CD8-positive, alpha-beta memory T cell (primary cell): ENCODE measurements at regions of chr11 and their contacts with region 1.

Region 1: GRCh38 chr11:122697636-122698167 is 42.2 kb downstream of the UBASH3B start:
- DNase-seq: peak in 3 of 5 donors; percentile 26 to 60 (median 56)
- H3K4me3 ChIP-seq: peak overlapping the region; percentile 45
- H3K4me3 Mint-ChIP-seq: peak overlapping the region; percentile 31 to 87 (median 76)
- H3K27ac ChIP-seq: no peak overlapping the region
- H3K27ac Mint-ChIP-seq: peak overlapping the region; percentile 84 to 99 (median 93)
- H3K4me1 ChIP-seq: peaks cover 66% of the 10 kb centered on the region
- H3K4me1 Mint-ChIP-seq: peaks cover 75 to 87% (median 86%) of the 10 kb centered on the region in 3 donors
- H3K27me3 ChIP-seq: no peaks in the 10 kb centered on the region
- H3K27me3 Mint-ChIP-seq: no peaks in the 10 kb centered on the region

Region 2: GRCh38 chr11:122673701-122674100 is 24.0 kb before region 1 on chr11:
- CTCF ChIA-PET with region 1: interaction called, 17 read pairs
- POLR2A ChIA-PET with region 1: interaction called, 20 read pairs
- DNase-seq: no peak
- H3K4me3 ChIP-seq: no peak overlapping the region
- H3K4me3 Mint-ChIP-seq: no peak overlapping the region
- H3K27ac ChIP-seq: no peak overlapping the region
- H3K27ac Mint-ChIP-seq: peak overlapping the region in 3 of 8 donors; percentile 8 to 42 (median 34)
- H3K4me1 ChIP-seq: peaks cover 71% of the 10 kb centered on the region
- H3K4me1 Mint-ChIP-seq: peaks cover 67 to 84% (median 76%) of the 10 kb centered on the region in 3 donors
- H3K27me3 ChIP-seq: no peaks in the 10 kb centered on the region
- H3K27me3 Mint-ChIP-seq: no peaks in the 10 kb centered on the region

Region 3: GRCh38 chr11:122686111-122686510 is 11.6 kb before region 1 on chr11:
- CTCF ChIA-PET with region 1: interaction called, 12 read pairs
- POLR2A ChIA-PET with region 1: no interaction called
- DNase-seq: no peak
- H3K4me3 ChIP-seq: no peak overlapping the region
- H3K4me3 Mint-ChIP-seq: no peak overlapping the region
- H3K27ac ChIP-seq: no peak overlapping the region
- H3K27ac Mint-ChIP-seq: no peak overlapping the region
- H3K4me1 ChIP-seq: peaks cover 27% of the 10 kb centered on the region
- H3K4me1 Mint-ChIP-seq: peaks cover 38 to 63% (median 41%) of the 10 kb centered on the region in 3 donors
- H3K27me3 ChIP-seq: no peaks in the 10 kb centered on the region
- H3K27me3 Mint-ChIP-seq: no peaks in the 10 kb centered on the region

Region 4: GRCh38 chr11:122743949-122744348 is 46.2 kb after region 1 on chr11:
- CTCF ChIA-PET with region 1: interaction called, 18 read pairs
- POLR2A ChIA-PET with region 1: interaction called, 6 read pairs
- DNase-seq: peak; percentile 50 to 88 (median 74)
- H3K4me3 ChIP-seq: peak overlapping the region; percentile 36
- H3K4me3 Mint-ChIP-seq: no peak overlapping the region
- H3K27ac ChIP-seq: peak overlapping the region; percentile 26
- H3K27ac Mint-ChIP-seq: no peak overlapping the region
- H3K4me1 ChIP-seq: peaks cover 70% of the 10 kb centered on the region
- H3K4me1 Mint-ChIP-seq: peaks cover 9 to 24% (median 21%) of the 10 kb centered on the region in 3 donors
- H3K27me3 ChIP-seq: no peaks in the 10 kb centered on the region
- H3K27me3 Mint-ChIP-seq: no peaks in the 10 kb centered on the region